Ovary (tissue), 10 donors: ENCODE measurements at regions of chr9 and their contacts with region 1.

Region 1: GRCh38 chr9:26856413-26857032 is 36.1 kb downstream of the CAAP1 start:
- DNase-seq: no peak
- H3K4me3 ChIP-seq: no peak overlapping the region
- H3K27ac ChIP-seq: no peak overlapping the region
- H3K4me1 ChIP-seq: no peaks in the 10 kb centered on the region
- H3K27me3 ChIP-seq: no peaks in the 10 kb centered on the region
- CTCF ChIP-seq: peak in 1 of 3 donors; percentile 10
- EP300 ChIP-seq: no peak
- POLR2A ChIP-seq: no peak

Region 2: DNA sequence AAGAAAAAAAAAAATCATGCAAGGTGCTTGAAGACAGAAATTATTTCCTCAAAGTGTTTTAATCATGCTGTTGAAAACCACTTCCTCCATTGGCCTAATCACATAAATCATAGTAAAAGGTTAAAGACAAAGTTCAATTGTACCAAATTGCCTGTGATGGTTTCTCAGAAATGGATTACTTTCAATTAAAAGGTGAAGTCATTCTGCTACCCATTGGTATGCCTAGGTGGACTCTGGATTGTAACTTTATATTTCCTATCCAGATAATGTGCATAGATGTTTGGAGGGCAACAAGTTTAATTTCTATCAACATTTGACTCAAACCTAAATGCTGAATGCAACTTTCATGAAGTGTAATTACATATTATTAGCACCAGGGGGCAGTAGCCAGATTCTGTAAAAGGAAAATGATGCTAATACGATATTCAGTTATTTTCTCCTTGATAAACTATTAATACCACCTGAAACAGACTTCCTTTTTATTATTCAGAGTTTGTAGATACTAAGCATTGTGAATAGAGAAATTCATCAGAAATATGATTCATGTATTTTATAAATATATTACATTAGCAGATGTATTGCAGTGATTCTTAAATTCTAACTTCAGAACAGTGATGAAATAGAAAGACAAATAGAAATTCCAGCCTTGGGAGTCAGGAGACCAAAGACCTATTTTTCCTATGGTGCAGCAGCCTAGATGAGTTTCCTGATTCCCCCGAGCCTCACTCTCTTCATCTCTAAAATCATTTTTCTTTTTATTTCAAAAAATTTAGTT is 112.1 kb before region 1 on chr9:
- intact Hi-C with region 1: loop called in 1 of 4 experiments (anchors 10 kb)
- DNase-seq: no peak
- H3K4me3 ChIP-seq: no peak overlapping the region
- H3K27ac ChIP-seq: no peak overlapping the region
- H3K4me1 ChIP-seq: no peaks in the 10 kb centered on the region
- H3K27me3 ChIP-seq: no peaks in the 10 kb centered on the region
- CTCF ChIP-seq: peak; percentile 23 to 55 (median 30)
- EP300 ChIP-seq: no peak
- POLR2A ChIP-seq: no peak

Region 3: DNA sequence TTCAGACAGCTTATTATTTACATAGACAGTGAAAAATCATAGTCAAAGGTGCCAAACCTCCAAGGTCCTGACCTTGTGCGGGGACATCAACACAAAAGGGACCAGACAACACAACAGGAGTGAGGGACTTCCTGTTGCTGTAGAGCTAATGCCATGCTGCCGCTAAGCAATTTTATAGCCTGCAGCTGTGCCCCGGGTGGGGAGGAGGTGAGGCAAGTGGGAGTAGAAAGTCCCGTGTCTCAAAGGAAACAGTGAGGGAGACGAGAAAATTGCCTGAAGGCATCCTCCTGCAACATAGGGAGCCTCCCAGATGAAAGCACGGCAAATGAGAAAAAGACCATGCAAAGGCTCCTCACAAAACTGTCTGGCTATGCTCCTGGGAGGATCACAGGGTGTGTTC is 22.7 kb before region 1 on chr9:
- intact Hi-C with region 1: loop called in 1 of 4 experiments (anchors 1 kb)
- DNase-seq: no peak
- H3K4me3 ChIP-seq: no peak overlapping the region
- H3K27ac ChIP-seq: no peak overlapping the region
- H3K4me1 ChIP-seq: peaks cover 5% of the 10 kb centered on the region
- H3K27me3 ChIP-seq: no peaks in the 10 kb centered on the region
- CTCF ChIP-seq: no peak
- EP300 ChIP-seq: no peak
- POLR2A ChIP-seq: no peak

Region 4: DNA sequence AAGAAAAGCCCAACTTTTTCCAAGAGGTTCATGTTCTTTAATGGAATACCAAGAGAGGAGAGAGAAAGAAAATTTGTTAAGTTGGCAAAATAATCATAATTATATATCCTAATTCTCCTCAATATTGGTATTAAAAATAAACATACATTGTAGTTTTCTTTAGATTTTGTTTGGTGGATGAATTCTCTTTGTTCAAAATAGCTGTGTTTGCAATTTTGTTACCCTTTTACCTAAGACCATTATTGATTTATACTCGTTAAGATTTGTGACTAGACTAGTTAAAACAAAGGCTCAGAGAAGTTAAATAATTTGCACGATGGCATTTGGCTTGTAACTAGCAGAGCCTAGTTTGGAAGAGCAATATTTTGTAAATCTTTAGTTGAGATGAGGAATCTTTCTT is 139.3 kb after region 1 on chr9:
- intact Hi-C with region 1: no loop called
- DNase-seq: no peak
- H3K4me3 ChIP-seq: no peak overlapping the region
- H3K27ac ChIP-seq: no peak overlapping the region
- H3K4me1 ChIP-seq: no peaks in the 10 kb centered on the region
- H3K27me3 ChIP-seq: no peaks in the 10 kb centered on the region
- CTCF ChIP-seq: no peak
- EP300 ChIP-seq: no peak
- POLR2A ChIP-seq: no peak